Activated naive CD4-positive, alpha-beta T cell treated with anti-CD3 and anti-CD28 coated beads for 36 hours (primary cell): ENCODE measurements at regions of chr5 and their contacts with region 1.

Region 1: DNA sequence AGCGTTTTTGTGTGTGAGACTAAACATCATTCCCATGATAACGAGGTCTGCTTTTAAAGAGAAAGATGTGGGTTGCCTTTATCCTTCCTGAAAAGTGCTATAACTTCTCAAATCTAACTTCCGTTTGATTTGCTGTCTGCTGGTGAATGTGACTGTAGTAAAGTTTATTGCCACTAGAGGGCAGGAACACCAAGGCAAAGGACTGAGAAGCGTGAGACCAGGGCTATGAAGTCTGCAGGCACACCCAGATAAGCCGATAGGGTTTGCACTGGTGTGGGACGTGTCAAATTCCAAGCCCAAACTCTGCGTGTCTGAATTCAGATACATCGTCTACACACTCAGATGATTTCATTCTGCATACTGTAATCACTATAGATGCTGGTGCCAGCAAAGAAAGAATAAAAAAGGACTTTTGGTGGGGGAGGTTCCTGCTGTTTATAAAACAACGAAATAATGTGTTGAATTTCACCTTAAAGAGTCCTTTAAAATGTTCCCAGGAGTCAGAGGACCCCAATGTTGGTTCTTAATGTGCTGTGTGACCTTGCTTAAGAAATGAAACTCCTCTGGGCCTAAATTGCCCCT is 87.2 kb downstream of the PTTG1 start:
- DNase-seq: peak; percentile 78
- H3K4me3 Mint-ChIP-seq: no peak overlapping the region
- H3K27ac Mint-ChIP-seq: no peak overlapping the region
- H3K4me1 Mint-ChIP-seq: peaks cover 30% of the 10 kb centered on the region
- H3K27me3 Mint-ChIP-seq: no peaks in the 10 kb centered on the region

Region 2: DNA sequence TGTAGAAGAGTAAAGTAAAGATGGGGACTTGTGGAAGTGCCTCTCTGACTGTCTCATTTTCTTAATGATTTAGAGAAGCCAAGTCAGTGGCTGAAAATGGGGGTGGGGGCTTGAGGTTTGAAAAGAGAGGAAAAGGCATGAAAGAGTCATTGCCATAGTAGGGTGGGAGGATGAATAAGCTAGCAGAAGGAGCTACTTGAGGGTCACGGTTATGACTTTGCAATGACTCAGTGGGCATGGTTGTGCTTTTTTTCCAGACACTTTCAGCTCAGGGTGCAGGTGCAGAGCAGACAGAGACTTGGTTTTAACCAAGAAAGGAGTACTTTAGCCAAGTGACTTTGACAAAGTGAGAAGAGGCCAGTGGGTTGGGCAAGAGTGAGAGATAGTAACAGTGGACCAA is 30.6 kb after region 1 on chr5:
- CTCF ChIA-PET with region 1: no interaction called
- intact Hi-C with region 1: loop called (anchors 1 kb)
- DNase-seq: peak; percentile 77
- H3K4me3 Mint-ChIP-seq: no peak overlapping the region
- H3K27ac Mint-ChIP-seq: no peak overlapping the region
- H3K4me1 Mint-ChIP-seq: peaks cover 7% of the 10 kb centered on the region
- H3K27me3 Mint-ChIP-seq: peaks cover 4% of the 10 kb centered on the region

Region 3: DNA sequence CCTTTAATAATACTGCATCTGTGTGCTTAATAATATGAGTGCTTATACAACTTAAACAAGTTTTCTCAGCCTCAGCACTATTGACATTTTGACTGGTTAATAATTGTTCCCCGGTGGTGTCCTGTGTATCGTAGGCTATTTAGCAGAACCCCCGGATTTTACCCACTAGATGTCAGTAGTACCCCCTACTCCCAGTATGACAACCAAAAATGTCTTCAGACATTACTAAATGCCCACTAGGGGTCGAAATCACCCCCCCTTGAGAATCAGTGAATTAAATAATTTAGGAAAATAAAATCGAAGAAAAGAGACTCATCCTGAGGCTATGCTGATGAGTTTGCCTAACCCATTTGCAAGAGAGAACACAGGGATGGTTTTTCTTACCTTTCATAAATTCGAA is 176.8 kb after region 1 on chr5:
- CTCF ChIA-PET with region 1: no interaction called
- intact Hi-C with region 1: loop called (anchors 2 kb)
- DNase-seq: no peak
- H3K4me3 Mint-ChIP-seq: no peak overlapping the region
- H3K27ac Mint-ChIP-seq: no peak overlapping the region
- H3K4me1 Mint-ChIP-seq: no peaks in the 10 kb centered on the region
- H3K27me3 Mint-ChIP-seq: peaks cover 6% of the 10 kb centered on the region

Region 4: DNA sequence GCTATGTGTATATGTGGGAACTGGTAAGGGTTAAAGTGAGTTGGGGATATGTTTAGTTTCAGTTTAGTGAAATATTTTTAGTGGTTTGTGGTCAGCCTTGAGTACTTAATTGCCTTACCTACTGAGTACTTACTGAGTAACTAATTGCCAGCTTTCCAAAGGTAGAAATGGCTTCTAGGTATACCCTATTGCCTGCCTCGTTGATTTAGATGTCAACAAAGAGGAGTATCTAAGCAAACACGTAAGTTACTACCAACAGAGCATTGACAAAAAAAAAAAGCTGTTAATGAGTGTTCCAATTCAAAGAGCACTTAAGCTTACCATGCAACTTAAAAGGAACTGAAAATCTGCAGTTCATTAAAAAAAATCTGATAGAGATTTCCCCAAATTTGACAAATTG is 334.4 kb after region 1 on chr5:
- CTCF ChIA-PET with region 1: no interaction called
- intact Hi-C with region 1: loop called (anchors 5 kb)
- DNase-seq: no peak
- H3K4me3 Mint-ChIP-seq: no peak overlapping the region
- H3K27ac Mint-ChIP-seq: no peak overlapping the region
- H3K4me1 Mint-ChIP-seq: no peaks in the 10 kb centered on the region
- H3K27me3 Mint-ChIP-seq: peaks cover 2% of the 10 kb centered on the region